ENCODE measurements at regions of chr10 and their contacts with region 1.

Region 1: DNA sequence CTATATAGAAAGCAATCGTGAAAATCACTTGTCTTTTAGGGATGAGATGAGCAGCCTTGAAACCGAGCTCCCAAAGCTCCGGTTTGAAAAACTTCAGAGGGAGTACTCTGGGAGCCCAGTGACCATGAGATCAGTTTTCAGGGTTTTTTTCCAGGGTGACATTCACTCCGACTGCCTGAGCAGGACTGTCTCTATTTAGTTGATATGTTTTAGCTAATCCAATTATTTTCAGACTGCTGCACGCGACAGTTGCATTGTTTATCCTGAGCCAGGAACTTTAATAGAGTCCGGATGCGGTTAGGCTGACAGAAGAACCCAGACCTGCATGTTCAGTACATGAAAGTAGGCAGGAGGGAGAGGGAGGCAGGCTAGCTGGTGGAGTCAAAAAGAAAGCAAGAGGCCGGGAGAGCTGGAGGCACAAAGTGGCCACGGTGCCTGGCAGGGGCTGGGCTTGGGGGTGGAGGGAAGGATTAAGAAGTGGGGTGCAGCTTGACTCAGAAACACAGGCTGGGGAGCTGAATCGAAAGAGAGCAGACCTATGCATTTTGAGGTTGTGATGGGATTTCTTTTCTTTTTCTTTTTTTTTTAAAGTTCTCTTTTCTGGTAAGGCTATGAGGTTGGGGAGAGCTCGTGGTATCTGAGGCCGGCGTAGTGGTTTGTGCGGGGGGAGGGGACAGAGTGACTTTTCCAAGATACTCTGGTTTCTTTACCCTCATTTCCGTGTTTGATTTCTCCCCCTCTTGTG is 5.6 kb downstream of the GATA3 start:
- DNase-seq: peak in 4 of 5 donors; percentile 41 to 73 (median 67)
- H3K4me3 ChIP-seq: peak overlapping the region; percentile 57
- H3K4me3 Mint-ChIP-seq: peak overlapping the region; percentile 90 to 99 (median 94)
- H3K27ac ChIP-seq: peak overlapping the region; percentile 58
- H3K27ac Mint-ChIP-seq: peak overlapping the region; percentile 94 to 97 (median 95)
- H3K4me1 ChIP-seq: peaks cover 77% of the 10 kb centered on the region
- H3K4me1 Mint-ChIP-seq: peaks cover 69 to 83% (median 75%) of the 10 kb centered on the region in 3 donors
- H3K27me3 ChIP-seq: no peaks in the 10 kb centered on the region
- H3K27me3 Mint-ChIP-seq: peaks cover 0 to 8% of the 10 kb centered on the region in 2 donors

Region 2: GRCh38 chr10:7915923-7916536 is 144.1 kb before region 1 on chr10:
- CTCF ChIA-PET with region 1: no interaction called
- POLR2A ChIA-PET with region 1: no interaction called
- DNase-seq: no peak
- H3K4me3 ChIP-seq: no peak overlapping the region
- H3K4me3 Mint-ChIP-seq: no peak overlapping the region
- H3K27ac ChIP-seq: no peak overlapping the region
- H3K27ac Mint-ChIP-seq: peak overlapping the region in 1 of 8 donors; percentile 61
- H3K4me1 ChIP-seq: no peaks in the 10 kb centered on the region
- H3K4me1 Mint-ChIP-seq: peaks cover 11 to 25% (median 22%) of the 10 kb centered on the region in 3 donors
- H3K27me3 ChIP-seq: no peaks in the 10 kb centered on the region
- H3K27me3 Mint-ChIP-seq: no peaks in the 10 kb centered on the region

Region 3: DNA sequence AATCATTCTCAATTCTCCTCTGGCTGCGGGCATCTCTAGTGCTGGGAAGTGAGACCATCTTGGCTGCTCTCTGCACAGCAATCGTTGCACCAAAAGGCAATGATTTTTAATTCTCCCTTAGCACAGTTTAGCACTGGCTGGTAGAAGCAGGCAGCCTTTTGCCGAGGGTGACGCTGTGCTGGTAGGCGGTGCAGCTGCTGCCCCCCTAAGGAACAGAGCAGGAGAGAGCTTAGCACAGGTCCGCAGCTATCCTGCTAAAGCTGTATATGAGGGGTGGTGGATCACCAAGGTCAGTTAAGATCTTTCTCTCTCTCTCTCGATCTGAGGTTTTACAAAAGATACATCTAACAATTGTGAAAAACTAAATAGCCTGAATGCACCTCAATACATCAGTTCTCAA is 384.5 kb after region 1 on chr10:
- CTCF ChIA-PET with region 1: interaction called, 14 read pairs
- POLR2A ChIA-PET with region 1: no interaction called
- DNase-seq: peak; percentile 10 to 75 (median 56)
- H3K4me3 ChIP-seq: no peak overlapping the region
- H3K4me3 Mint-ChIP-seq: no peak overlapping the region
- H3K27ac ChIP-seq: no peak overlapping the region
- H3K27ac Mint-ChIP-seq: peak overlapping the region in 5 of 8 donors; percentile 13 to 90 (median 67)
- H3K4me1 ChIP-seq: no peaks in the 10 kb centered on the region
- H3K4me1 Mint-ChIP-seq: peaks cover 12 to 24% (median 17%) of the 10 kb centered on the region in 3 donors
- H3K27me3 ChIP-seq: no peaks in the 10 kb centered on the region
- H3K27me3 Mint-ChIP-seq: no peaks in the 10 kb centered on the region

Measured in CD8-positive, alpha-beta memory T cell (primary cell).